B cell (primary cell): ENCODE measurements at regions of chr22 and their contacts with region 1.

Region 1: GRCh38 chr22:22181341-22181850 is 63.2 kb upstream of the VPREB1 start:
- DNase-seq: no peak
- ATAC-seq: no peak
- H3K4me3 ChIP-seq: no peak overlapping the region
- H3K4me3 Mint-ChIP-seq: no peak overlapping the region
- H3K27ac ChIP-seq: no peak overlapping the region
- H3K27ac Mint-ChIP-seq: no peak overlapping the region
- H3K4me1 ChIP-seq: peaks cover 18 to 27% of the 10 kb centered on the region in 2 donors
- H3K4me1 Mint-ChIP-seq: peaks cover 37% of the 10 kb centered on the region
- H3K27me3 ChIP-seq: no peaks in the 10 kb centered on the region
- H3K27me3 Mint-ChIP-seq: no peaks in the 10 kb centered on the region
- CTCF ChIP-seq: no peak

Region 2: DNA sequence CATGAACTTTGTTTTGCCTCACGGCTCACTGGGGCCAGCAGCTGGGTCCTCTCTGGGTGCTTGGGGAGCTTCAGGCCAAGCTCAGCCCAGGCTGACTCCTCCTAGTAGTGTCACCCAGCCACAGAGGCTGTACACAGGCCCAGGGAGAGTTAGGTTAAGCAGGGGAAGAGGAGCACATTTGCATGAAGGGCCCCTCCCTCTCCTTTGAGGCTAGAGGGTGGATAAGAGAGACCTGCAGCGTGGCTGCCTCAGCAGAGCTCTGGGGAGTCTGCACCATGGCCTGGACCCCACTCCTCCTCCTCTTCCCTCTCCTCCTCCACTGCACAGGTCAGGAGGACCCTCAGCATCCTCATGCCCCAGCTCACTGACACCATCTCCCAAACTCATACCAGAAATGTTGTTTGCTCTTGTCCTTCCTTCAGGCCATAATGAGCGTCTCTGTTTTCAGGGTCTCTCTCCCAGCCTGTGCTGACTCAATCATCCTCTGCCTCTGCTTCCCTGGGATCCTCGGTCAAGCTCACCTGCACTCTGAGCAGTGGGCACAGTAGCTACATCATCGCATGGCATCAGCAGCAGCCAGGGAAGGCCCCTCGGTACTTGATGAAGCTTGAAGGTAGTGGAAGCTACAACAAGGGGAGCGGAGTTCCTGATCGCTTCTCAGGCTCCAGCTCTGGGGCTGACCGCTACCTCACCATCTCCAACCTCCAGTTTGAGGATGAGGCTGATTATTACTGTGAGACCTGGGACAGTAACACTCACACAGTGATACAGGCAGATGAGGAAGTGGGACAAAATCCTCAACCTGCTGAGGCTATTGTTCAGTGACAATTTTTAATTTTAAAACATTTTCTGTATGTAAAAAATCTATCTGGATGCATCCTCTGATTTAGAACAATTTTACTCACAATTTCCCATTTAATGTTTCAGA is 19.2 kb before region 1 on chr22:
- CTCF ChIA-PET with region 1: interaction called, 16 read pairs
- POLR2A ChIA-PET with region 1: interaction called, 9 read pairs
- intact Hi-C with region 1: no loop called
- DNase-seq: peak; percentile 80
- ATAC-seq: peak; percentile 95
- H3K4me3 ChIP-seq: peak overlapping the region in 4 of 5 experiments; percentile 14 to 70 (median 38)
- H3K4me3 Mint-ChIP-seq: peak overlapping the region; percentile 89
- H3K27ac ChIP-seq: peak overlapping the region; percentile 96 to 98
- H3K27ac Mint-ChIP-seq: peak overlapping the region; percentile 98
- H3K4me1 ChIP-seq: peaks cover 75 to 82% of the 10 kb centered on the region in 2 donors
- H3K4me1 Mint-ChIP-seq: peaks cover 85% of the 10 kb centered on the region
- H3K27me3 ChIP-seq: no peaks in the 10 kb centered on the region
- H3K27me3 Mint-ChIP-seq: no peaks in the 10 kb centered on the region
- CTCF ChIP-seq: no peak

Region 3: GRCh38 chr22:22168190-22168940 is 13.0 kb before region 1 on chr22:
- CTCF ChIA-PET with region 1: interaction called, 19 read pairs
- POLR2A ChIA-PET with region 1: interaction called, 4 read pairs
- intact Hi-C with region 1: no loop called
- DNase-seq: peak; percentile 74
- ATAC-seq: peak; percentile 55
- H3K4me3 ChIP-seq: peak overlapping the region; percentile 20 to 59 (median 40)
- H3K4me3 Mint-ChIP-seq: peak overlapping the region; percentile 92
- H3K27ac ChIP-seq: peak overlapping the region; percentile 96 to 98
- H3K27ac Mint-ChIP-seq: peak overlapping the region; percentile 100
- H3K4me1 ChIP-seq: peaks cover 80 to 88% of the 10 kb centered on the region in 2 donors
- H3K4me1 Mint-ChIP-seq: peaks cover 81% of the 10 kb centered on the region
- H3K27me3 ChIP-seq: no peaks in the 10 kb centered on the region
- H3K27me3 Mint-ChIP-seq: no peaks in the 10 kb centered on the region
- CTCF ChIP-seq: no peak